ENCODE measurements at regions of chr3 and their contacts with region 1.

Region 1: DNA sequence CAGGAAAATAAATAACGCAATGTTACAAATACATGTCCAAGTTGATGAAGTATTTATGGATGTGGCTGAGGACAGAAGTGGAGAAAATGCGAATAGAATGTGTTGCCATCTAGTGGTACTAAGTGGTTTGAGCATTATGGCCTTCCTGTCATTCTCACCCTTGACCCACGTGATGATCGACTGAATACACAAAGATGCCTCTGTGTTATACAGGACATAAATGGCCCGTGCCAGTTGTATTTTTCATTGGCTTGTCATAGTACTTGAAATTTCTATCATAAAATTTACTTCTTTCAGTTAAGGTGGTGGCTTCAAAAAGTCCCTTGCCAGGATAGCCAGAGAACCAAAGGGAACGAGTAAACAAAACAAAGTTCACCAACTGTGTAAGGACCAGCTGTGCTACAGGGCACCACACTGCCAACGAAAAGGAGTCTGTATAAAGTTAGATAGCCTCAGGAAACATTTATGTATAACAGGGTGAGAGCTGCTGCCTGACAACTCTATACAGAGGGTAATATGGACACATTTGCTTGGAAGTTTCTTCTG is 103.7 kb downstream of the MYH15 start:
- DNase-seq: peak; percentile 64
- H3K4me3 ChIP-seq: no peak overlapping the region
- H3K27ac ChIP-seq: no peak overlapping the region
- H3K4me1 ChIP-seq: no peaks in the 10 kb centered on the region
- H3K27me3 ChIP-seq: no peaks in the 10 kb centered on the region
- CTCF ChIP-seq: peak; percentile 86

Region 2: DNA sequence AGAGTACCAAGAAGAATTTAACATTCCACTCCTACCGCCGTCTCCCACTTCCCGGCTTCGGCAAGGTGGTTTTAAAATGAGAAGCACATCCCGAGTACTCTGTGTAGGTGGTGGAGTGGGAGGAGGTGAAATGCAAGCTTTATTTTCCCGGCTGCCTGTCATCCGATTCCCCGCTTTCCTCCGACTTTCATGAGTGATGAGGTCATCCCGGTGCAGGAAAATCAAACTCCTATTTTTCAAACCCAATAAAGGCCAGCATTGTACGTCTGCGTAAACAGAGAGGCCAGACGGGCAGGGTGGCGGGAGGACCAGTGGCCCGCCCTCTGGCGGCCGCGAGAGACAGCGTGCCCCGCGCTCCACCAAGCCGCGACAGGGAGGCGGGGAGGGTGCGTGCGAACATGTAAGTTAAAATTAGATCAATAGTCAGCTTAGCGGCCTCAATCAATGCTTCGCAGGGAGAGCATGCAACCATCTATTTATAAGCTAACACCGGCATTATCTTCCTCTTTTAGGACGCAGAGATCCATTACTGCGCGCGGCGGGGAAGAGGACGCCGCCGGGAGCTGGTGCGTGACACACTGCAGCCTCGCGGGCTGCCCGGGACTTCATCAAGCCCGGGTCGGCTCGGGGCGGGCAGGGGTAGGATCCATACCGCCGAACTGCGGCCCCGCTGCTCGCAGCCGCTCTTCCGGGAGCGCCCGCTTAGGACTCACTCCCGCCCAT is 479.2 kb before region 1 on chr3:
- CTCF ChIA-PET with region 1: no interaction called
- dilution Hi-C with region 1: no loop called
- in situ Hi-C with region 1: loop called in 1 of 2 experiments (anchors 25 kb)
- intact Hi-C with region 1: no loop called
- DNase-seq: peak; percentile 69
- H3K4me3 ChIP-seq: peak overlapping the region; percentile 47 to 67 (median 52)
- H3K27ac ChIP-seq: no peak overlapping the region
- H3K4me1 ChIP-seq: no peaks in the 10 kb centered on the region
- H3K27me3 ChIP-seq: peaks cover 2% of the 10 kb centered on the region
- CTCF ChIP-seq: peak; percentile 78 to 96

Region 3: GRCh38 chr3:107938143-107938542 is 468.6 kb before region 1 on chr3:
- CTCF ChIA-PET with region 1: no interaction called
- dilution Hi-C with region 1: no loop called
- in situ Hi-C with region 1: loop called (anchors 10 to 25 kb)
- intact Hi-C with region 1: loop called (anchors 1 kb)
- DNase-seq: peak; percentile 46
- H3K4me3 ChIP-seq: no peak overlapping the region
- H3K27ac ChIP-seq: no peak overlapping the region
- H3K4me1 ChIP-seq: peaks cover 5% of the 10 kb centered on the region
- H3K27me3 ChIP-seq: no peaks in the 10 kb centered on the region
- CTCF ChIP-seq: peak; percentile 41 to 72

Region 4: DNA sequence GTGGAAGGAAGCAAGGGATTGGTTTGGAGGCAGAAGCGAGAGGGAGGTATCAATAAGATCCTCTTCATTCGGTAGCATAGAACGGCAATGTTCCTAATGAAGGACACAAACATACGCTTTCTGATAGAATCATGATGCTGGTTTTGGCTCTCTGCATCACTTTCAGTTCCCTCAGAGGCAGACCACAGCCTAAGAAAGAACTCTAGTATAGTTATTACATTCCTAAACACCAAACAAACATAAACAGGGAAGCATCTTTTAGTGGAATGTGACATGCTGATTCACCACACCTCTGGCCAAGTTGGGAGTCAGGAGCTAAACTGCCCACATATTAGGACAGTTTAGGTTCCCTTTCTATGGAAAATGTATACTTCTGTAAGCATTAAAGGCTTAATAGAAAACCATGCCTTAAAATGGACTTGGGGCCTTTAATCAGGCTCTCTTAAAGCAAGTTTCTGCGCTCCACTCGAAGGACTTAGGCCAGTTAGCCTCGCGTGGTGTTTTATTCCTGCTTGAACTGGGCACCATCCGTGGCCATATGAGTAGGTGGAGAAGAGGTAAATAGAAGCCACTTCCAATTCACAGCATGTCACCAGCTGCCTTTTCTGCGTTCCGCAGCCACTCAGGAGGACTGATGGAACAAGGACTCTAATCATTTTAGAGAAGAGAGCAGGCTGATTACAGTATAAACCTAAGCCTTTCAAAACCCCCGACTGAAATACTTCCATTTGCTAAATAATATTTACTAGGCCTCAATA is 369.6 kb before region 1 on chr3:
- CTCF ChIA-PET with region 1: no interaction called
- dilution Hi-C with region 1: no loop called
- in situ Hi-C with region 1: no loop called
- intact Hi-C with region 1: loop called (anchors 10 kb)
- DNase-seq: no peak
- H3K4me3 ChIP-seq: no peak overlapping the region
- H3K27ac ChIP-seq: no peak overlapping the region
- H3K4me1 ChIP-seq: no peaks in the 10 kb centered on the region
- H3K27me3 ChIP-seq: no peaks in the 10 kb centered on the region
- CTCF ChIP-seq: no peak

Region 5: GRCh38 chr3:108153451-108153981 is 253.2 kb before region 1 on chr3:
- CTCF ChIA-PET with region 1: interaction called, 4 read pairs
- dilution Hi-C with region 1: no loop called
- in situ Hi-C with region 1: loop called in 1 of 2 experiments (anchors 10 kb)
- intact Hi-C with region 1: loop called (anchors 1 kb)
- DNase-seq: peak; percentile 60
- H3K4me3 ChIP-seq: no peak overlapping the region
- H3K27ac ChIP-seq: no peak overlapping the region
- H3K4me1 ChIP-seq: no peaks in the 10 kb centered on the region
- H3K27me3 ChIP-seq: no peaks in the 10 kb centered on the region
- CTCF ChIP-seq: peak; percentile 39 to 58

Region 6: DNA sequence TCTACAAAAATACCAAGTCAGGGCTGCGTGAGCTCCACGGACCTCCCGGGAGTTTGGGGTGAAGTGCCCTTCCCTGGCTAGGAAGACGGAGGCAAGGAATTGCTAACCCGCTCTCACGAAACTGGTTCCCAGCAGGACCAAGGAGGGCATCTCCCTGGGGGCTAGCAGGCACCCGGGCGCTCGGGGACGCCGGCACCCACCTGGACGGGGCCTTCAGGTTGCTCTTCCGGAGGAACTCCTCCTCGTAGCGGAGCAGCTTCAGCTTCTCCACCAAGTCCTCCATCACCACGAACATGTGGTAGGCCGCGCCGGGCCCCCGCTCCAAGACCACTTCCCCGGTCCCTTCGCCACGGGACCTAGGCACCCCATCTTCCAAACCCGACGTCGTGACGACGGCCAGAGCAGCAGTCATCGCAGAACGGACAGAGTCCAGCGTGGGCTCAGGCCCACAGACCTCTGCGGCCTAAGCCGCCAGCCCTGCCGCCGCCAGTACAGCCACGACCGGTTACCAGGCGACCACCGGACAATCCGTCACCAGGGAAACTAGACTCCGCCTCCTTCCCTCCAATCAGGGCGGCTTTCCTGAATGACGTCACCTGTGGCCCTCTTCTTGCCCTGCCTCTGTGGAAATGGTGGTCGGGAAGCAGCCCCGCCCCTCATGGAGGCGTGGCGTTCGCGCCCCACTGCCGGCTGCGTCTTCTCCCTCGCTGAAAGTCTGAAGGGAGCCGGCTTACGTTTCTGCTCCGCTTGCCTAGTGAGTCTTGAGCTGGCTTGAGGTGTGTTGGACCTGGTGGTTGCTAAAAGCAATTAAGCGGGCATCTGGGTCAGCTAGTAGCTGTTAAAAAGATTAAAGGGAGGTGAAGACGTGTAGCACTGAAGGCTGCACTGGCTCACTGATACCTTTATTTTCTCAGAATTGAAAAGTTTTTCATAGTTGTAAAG is 184.6 kb before region 1 on chr3 and contains the start of gene IFT57:
- CTCF ChIA-PET with region 1: no interaction called
- dilution Hi-C with region 1: no loop called
- in situ Hi-C with region 1: no loop called
- intact Hi-C with region 1: loop called (anchors 2 kb)
- DNase-seq: peak; percentile 97
- H3K4me3 ChIP-seq: peak within 1 kb of the TSS; percentile 67 to 80 (median 71)
- H3K27ac ChIP-seq: peak within 1 kb of the TSS; percentile 94
- H3K4me1 ChIP-seq: peaks cover 21% of the 10 kb centered on the region
- H3K27me3 ChIP-seq: no peaks in the 10 kb centered on the region
- CTCF ChIP-seq: no peak
- total RNA-seq, gene IFT57: 32.8 to 37.6 TPM

Region 7: DNA sequence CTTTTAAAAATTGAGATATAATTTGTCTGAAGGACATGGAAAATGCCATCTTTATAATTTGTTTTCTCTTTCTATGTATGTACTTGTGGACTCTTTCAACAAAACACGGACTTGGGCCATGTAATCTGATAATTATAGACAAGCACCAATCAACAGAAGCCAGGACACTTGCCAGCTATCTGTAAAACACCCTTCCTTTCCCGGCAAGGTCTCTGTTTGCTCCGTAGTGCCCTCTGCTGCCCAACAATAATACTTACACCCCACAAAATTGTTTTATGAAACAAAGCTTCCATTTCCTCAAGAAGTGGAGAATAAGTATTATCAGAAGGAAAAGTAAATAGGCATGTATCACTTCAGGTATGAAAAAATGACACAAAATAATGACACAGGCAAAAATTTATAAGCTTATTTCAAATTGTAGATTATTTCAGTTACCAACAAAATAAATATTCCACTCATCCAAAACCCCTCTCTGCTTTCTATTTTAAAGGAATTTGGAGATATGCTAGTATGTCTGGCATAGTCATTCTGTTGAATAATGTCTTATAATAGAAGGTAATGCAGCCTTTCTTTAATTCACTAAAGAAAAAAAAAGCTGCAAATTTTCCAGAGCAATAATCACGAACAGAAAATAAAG is 70.9 kb after region 1 on chr3:
- CTCF ChIA-PET with region 1: no interaction called
- dilution Hi-C with region 1: no loop called
- in situ Hi-C with region 1: no loop called
- intact Hi-C with region 1: loop called (anchors 2 kb)
- DNase-seq: peak; percentile 48
- H3K4me3 ChIP-seq: no peak overlapping the region
- H3K27ac ChIP-seq: no peak overlapping the region
- H3K4me1 ChIP-seq: peaks cover 2% of the 10 kb centered on the region
- H3K27me3 ChIP-seq: no peaks in the 10 kb centered on the region
- CTCF ChIP-seq: peak; percentile 73 to 75